ENCODE measurements at regions of chr2 and their contacts with region 1.

Region 1: GRCh38 chr2:168160897-168161296 is 86.5 kb downstream of the STK39 start:
- DNase-seq: no peak
- H3K4me3 ChIP-seq: no peak overlapping the region
- H3K27ac ChIP-seq: no peak overlapping the region
- H3K4me1 ChIP-seq: peaks cover 0 to 3% (median 0%) of the 10 kb centered on the region in 4 experiments; a peak in 1 of 7 replicates
- H3K27me3 ChIP-seq: no peaks in the 10 kb centered on the region
- CTCF ChIP-seq: peak in 2 of 3 experiments; percentile 62 to 69; a peak in 3 of 4 replicates
- EP300 ChIP-seq: no peak
- POLR2A ChIP-seq: no peak
- RAD21 ChIP-seq: peak; percentile 66 to 83

Region 2: DNA sequence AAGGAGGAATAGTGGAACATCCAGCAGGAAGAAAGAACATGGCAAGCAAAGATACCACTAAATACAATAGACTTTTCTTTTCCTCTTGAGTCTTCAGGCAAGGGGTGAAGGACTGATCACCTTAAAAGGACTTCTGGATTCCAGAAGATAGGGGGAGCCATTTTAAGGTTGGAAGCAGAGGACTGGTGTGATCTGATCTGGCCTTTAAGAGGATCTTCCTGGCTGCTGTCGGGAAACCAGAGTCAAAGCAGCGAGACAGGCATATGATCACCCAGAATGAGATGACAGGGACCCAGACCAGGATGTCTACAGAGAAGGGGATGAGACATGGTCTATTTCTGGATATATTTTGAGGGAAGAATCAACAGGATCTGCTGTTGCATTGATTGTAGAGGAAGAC is 471.5 kb before region 1 on chr2:
- CTCF ChIA-PET with region 1: no interaction called
- POLR2A ChIA-PET with region 1: no interaction called
- DNase-seq: peak in 1 of 2 experiments; percentile 39
- H3K4me3 ChIP-seq: no peak overlapping the region
- H3K27ac ChIP-seq: no peak overlapping the region
- H3K4me1 ChIP-seq: no peaks in the 10 kb centered on the region
- H3K27me3 ChIP-seq: peaks cover 0 to 1% (median 0%) of the 10 kb centered on the region in 4 experiments; a peak in 1 of 7 replicates
- CTCF ChIP-seq: peak in 2 of 3 experiments; percentile 58 to 65; a peak in 3 of 4 replicates
- EP300 ChIP-seq: no peak
- POLR2A ChIP-seq: no peak
- RAD21 ChIP-seq: peak; percentile 46 to 63

Region 3: DNA sequence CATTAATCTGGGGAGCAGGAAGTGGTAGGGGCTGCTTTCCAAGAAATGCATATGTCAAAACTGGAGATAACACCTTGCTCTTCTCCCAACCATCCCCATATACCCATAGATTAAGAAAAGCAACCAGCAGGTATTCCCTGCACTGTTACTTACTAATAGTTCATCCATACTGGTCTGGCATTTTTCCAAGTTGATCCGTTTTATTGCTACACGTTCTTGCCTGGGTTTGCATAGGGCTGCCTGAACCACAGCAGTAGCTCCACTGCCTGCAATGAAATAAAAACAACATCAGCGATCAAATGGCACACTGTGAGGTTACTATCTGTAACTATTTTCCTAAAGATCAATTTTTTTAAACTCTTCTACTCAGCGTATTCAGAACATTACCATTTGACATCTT is 20.9 kb after region 1 on chr2:
- CTCF ChIA-PET with region 1: interaction called, 12 read pairs
- POLR2A ChIA-PET with region 1: no interaction called
- DNase-seq: no peak
- H3K4me3 ChIP-seq: no peak overlapping the region
- H3K27ac ChIP-seq: no peak overlapping the region
- H3K4me1 ChIP-seq: peaks cover 0 to 16% (median 6%) of the 10 kb centered on the region in 4 experiments; a peak in 5 of 7 replicates
- H3K27me3 ChIP-seq: no peaks in the 10 kb centered on the region
- CTCF ChIP-seq: no peak
- EP300 ChIP-seq: no peak
- POLR2A ChIP-seq: no peak
- RAD21 ChIP-seq: no peak

Region 4: DNA sequence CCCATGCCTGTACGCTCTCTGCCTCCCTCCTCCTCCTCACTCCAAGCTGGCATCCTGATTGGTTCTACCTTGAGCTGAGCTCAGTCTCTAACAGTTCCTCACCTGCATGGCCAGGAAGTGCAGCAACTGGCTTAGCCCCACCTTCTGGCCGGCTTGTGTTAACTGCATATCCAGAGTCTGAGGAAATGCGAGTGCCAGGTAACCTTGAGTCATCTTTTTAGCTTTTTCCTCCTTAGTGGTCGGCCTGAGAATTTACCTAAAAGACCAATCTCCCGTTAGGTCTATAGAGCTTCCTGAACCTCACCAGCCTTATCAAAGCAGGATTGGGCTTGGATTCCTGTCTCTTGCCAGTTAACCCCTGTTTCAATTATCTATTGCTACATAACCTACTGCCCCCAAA is 176.0 kb after region 1 on chr2:
- CTCF ChIA-PET with region 1: interaction called, 36 read pairs
- POLR2A ChIA-PET with region 1: no interaction called
- DNase-seq: peak; percentile 60 to 67
- H3K4me3 ChIP-seq: no peak overlapping the region
- H3K27ac ChIP-seq: no peak overlapping the region
- H3K4me1 ChIP-seq: peaks cover 0 to 18% (median 3%) of the 10 kb centered on the region in 4 experiments; a peak in 3 of 7 replicates
- H3K27me3 ChIP-seq: no peaks in the 10 kb centered on the region
- CTCF ChIP-seq: peak; percentile 72 to 96 (median 84)
- EP300 ChIP-seq: no peak
- POLR2A ChIP-seq: no peak
- RAD21 ChIP-seq: peak; percentile 75 to 80

Measured in H1 (cell line).